Posterior vena cava (tissue), 2 donors: ENCODE measurements at regions of chr5 and their contacts with region 1.

Region 1: GRCh38 chr5:180950291-180950949 is 38.2 kb upstream of the BTNL3 start:
- DNase-seq: no peak

Region 2: GRCh38 chr5:181005791-181006190 is 55.4 kb after region 1 on chr5:
- intact Hi-C with region 1: loop called in 1 of 2 experiments (anchors 1 kb)
- DNase-seq: no peak